Activated naive CD4-positive, alpha-beta T cell treated with anti-CD3 and anti-CD28 coated beads, Interleukin-2, amount 10 ng/mL, durations not matched to agents 7 days and 5 days (primary cell): ENCODE measurements at regions of chr7 and their contacts with region 1.

Region 1: DNA sequence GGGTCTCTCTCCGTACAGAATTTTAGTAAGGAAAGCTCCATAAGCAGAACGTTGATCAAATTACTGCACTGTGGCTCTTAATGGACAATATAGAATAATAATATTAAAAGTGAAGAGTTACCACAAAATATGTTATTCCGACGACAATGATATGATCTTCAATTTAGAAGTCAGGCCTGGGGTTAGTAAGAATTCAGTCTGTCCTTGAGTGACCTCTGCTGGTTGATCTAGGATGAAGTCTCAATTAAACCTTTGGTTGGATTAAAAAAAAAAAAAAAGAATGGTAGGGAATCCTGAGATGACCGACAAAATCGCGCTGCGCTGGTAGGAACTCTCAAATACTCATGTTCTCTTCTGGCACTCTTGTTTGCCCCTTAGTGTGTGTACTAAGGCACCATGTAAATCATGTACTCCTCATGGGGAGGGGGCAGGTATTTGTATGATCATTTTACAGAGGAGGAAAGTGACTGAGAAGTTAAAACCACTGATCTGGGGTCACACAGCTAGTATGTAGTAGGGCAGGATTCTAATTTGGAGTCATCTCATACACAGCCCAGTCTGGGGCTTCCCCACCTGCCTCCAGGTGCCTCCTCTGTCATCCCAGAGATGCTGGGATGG is 161.3 kb upstream of the NPVF start:
- DNase-seq: peak; percentile 24
- H3K4me3 Mint-ChIP-seq: no peak overlapping the region
- H3K27ac Mint-ChIP-seq: no peak overlapping the region
- H3K4me1 Mint-ChIP-seq: no peaks in the 10 kb centered on the region
- H3K27me3 Mint-ChIP-seq: peaks cover 14% of the 10 kb centered on the region

Region 2: DNA sequence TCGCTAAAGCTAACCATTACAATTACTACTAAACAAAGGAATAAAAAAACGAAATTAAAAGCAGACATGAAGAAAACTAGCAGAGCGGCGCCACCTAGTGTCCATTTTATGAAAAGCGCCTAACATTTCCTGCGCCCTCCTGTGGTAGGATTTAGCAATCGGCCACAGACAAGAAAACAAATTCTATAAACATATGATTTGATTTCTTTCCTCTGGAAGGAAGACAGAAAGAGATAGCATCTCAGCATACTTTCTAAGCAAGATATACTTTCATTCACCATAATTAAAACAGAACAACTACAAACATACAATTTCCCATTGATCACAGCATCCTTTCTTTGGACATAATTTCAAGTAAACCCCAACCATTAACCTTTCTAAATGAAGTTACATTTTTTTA is 176.4 kb after region 1 on chr7:
- CTCF ChIA-PET with region 1: interaction called, 167 read pairs
- DNase-seq: peak; percentile 70
- H3K4me3 Mint-ChIP-seq: no peak overlapping the region
- H3K27ac Mint-ChIP-seq: peak overlapping the region; percentile 25
- H3K4me1 Mint-ChIP-seq: peaks cover 2% of the 10 kb centered on the region
- H3K27me3 Mint-ChIP-seq: peaks cover 4% of the 10 kb centered on the region

Region 3: GRCh38 chr7:25851332-25852210 is 462.0 kb after region 1 on chr7:
- CTCF ChIA-PET with region 1: interaction called, 10 read pairs
- DNase-seq: peak; percentile 76
- H3K4me3 Mint-ChIP-seq: peak overlapping the region; percentile 59
- H3K27ac Mint-ChIP-seq: peak overlapping the region; percentile 62
- H3K4me1 Mint-ChIP-seq: peaks cover 26% of the 10 kb centered on the region
- H3K27me3 Mint-ChIP-seq: peaks cover 60% of the 10 kb centered on the region